PC-9 (cell line): ENCODE measurements at regions of chr1 and their contacts with region 1.

Region 1: DNA sequence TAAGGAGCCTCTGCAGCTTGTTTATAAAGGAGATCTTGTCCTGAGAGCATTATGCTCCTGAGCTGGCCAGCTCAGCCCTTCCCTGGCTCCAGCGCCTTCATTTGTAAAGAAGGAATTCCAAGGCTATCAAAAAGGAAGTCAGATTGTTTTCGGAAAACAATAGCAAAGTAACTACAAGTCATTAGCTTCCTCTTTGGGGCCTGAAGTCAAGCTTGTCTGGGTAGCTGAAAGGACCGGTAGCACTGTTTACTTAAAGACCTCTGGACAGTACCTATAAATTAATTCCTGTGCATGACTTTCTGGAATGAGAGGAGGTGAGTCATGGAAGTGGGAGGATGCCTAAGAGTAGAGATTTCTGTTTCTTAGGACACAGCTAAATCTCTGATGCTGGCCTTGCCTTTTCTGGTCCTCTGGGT is 20.7 kb upstream of the GJA5 start:
- DNase-seq: peak; percentile 41 to 96
- H3K4me3 ChIP-seq: no peak overlapping the region; the same call in 1 of the 2 replicates
- H3K27ac ChIP-seq: peak overlapping the region; percentile 72
- H3K4me1 ChIP-seq: peaks cover 41% of the 10 kb centered on the region
- H3K27me3 ChIP-seq: no peaks in the 10 kb centered on the region
- CTCF ChIP-seq: no peak

Region 2: DNA sequence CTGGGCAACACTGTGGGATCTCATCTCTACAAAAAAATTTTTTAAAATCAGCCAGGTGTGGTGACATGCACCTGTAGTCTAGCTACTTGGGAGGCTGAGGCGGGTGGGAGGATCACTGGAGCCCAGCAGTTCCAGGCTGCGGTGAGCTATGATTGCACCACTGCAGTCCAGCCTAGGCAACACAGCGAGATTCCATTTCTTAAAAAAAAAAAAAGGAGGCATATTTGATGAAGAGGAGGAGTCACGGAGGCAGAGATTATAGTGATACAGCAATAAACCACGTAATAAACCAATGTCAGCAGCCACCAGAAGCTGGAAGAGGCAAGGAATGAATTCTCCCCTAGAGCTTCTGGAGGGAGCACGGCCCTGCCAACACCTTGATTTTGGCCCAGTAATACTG is 1827.2 kb before region 1 on chr1:
- CTCF ChIA-PET with region 1: no interaction called
- POLR2A ChIA-PET with region 1: interaction called, 17 read pairs
- intact Hi-C with region 1: no loop called
- DNase-seq: no peak
- H3K4me3 ChIP-seq: no peak overlapping the region
- H3K27ac ChIP-seq: no peak overlapping the region
- H3K4me1 ChIP-seq: peaks cover 4% of the 10 kb centered on the region
- H3K27me3 ChIP-seq: peaks cover 44% of the 10 kb centered on the region
- CTCF ChIP-seq: no peak

Region 3: DNA sequence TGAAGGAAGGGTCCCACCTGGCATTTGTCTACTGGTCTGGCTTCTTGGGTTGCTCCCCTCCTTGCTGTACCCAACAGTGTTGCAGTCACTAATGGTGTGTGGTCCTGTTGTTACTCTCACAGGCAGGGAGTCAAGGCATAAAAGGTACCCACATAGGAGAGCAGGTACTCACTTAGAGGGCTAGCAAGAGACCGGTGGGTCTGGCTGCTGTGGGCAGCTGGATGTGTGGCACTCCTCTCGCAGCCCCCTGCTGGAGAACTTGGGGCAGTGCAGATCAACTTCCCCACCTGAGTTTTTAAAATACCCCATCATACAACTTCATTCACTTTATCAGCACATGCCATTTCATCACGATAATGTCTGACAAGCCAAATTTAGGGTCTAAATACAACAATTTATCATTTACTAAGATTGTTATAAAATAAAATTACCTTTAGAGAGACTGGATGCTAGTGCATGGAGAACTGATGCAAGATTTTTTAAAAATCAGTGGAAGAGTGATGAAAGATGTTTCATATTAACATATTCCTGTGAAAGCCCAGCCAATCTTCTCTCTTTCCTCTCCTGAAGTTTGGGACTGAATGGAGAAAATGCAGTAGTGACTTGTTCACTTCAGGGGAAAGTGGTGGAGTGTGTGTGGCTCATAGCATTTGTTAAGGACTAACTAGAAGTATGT is 153.5 kb before region 1 on chr1:
- CTCF ChIA-PET with region 1: no interaction called
- POLR2A ChIA-PET with region 1: no interaction called
- intact Hi-C with region 1: no loop called
- DNase-seq: peak in 1 of 2 experiments; percentile 25
- H3K4me3 ChIP-seq: no peak overlapping the region
- H3K27ac ChIP-seq: 0 out of 2 replicates have a peak overlapping the region, but pooled peaks have one; percentile 9
- H3K4me1 ChIP-seq: no peaks in the 10 kb centered on the region
- H3K27me3 ChIP-seq: no peaks in the 10 kb centered on the region
- CTCF ChIP-seq: peak; percentile 94

Region 4: GRCh38 chr1:147762233-147763024 is 18.6 kb before region 1 on chr1:
- CTCF ChIA-PET with region 1: interaction called, 5 read pairs
- POLR2A ChIA-PET with region 1: interaction called, 5 read pairs
- intact Hi-C with region 1: loop called (anchors 2 kb)
- DNase-seq: peak in 1 of 2 experiments; percentile 74
- H3K4me3 ChIP-seq: no peak overlapping the region
- H3K27ac ChIP-seq: peak overlapping the region; percentile 79
- H3K4me1 ChIP-seq: peaks cover 64% of the 10 kb centered on the region
- H3K27me3 ChIP-seq: no peaks in the 10 kb centered on the region
- CTCF ChIP-seq: no peak

Region 5: DNA sequence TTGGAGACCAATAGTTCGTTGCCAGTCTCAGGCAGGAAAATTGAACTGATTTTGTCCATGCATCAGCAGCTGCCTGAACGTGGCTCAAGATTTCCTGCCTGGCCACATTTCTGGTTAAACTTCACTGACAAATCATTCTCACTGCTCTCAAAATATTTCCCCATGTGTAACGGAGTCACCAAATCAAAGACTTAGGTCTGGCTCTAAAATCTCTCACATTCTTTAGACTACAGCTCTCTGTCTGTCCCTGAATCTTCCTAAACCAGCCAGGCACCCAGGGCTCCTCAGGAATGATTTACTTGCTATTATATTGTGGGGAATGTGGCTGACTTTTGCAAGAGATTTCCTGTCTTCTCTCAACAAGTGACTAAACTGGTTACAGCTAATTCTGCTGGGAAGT is 72.3 kb after region 1 on chr1:
- CTCF ChIA-PET with region 1: no interaction called
- POLR2A ChIA-PET with region 1: interaction called, 3 read pairs
- intact Hi-C with region 1: loop called (anchors 1 kb)
- DNase-seq: peak in 1 of 2 experiments; percentile 49
- H3K4me3 ChIP-seq: no peak overlapping the region
- H3K27ac ChIP-seq: peak overlapping the region; percentile 44
- H3K4me1 ChIP-seq: peaks cover 57% of the 10 kb centered on the region
- H3K27me3 ChIP-seq: no peaks in the 10 kb centered on the region
- CTCF ChIP-seq: no peak

Region 6: GRCh38 chr1:147878022-147878421 is 97.0 kb after region 1 on chr1:
- CTCF ChIA-PET with region 1: no interaction called
- POLR2A ChIA-PET with region 1: no interaction called
- intact Hi-C with region 1: loop called (anchors 10 kb)
- DNase-seq: no peak
- H3K4me3 ChIP-seq: no peak overlapping the region
- H3K27ac ChIP-seq: no peak overlapping the region
- H3K4me1 ChIP-seq: no peaks in the 10 kb centered on the region
- H3K27me3 ChIP-seq: no peaks in the 10 kb centered on the region
- CTCF ChIP-seq: no peak